Activated naive CD4-positive, alpha-beta T cell treated with anti-CD3 and anti-CD28 coated beads for 36 hours (primary cell): ENCODE measurements at regions of chrX and their contacts with region 1.

Region 1: GRCh38 chrX:153971450-153972367 is at the start of gene HCFC1:
- DNase-seq: peak; percentile 91
- H3K4me3 Mint-ChIP-seq: peak within 1 kb of the TSS; percentile 100
- H3K27ac Mint-ChIP-seq: peak within 1 kb of the TSS; percentile 100
- H3K4me1 Mint-ChIP-seq: peaks cover 31% of the 10 kb centered on the region
- H3K27me3 Mint-ChIP-seq: no peaks in the 10 kb centered on the region
- total RNA-seq, gene HCFC1: 85.0 to 86.1 TPM

Region 2: GRCh38 chrX:153724252-153725040 is 247.3 kb before region 1 on chrX and contains the starts of genes ABCD1 and BCAP31:
- CTCF ChIA-PET with region 1: no interaction called
- intact Hi-C with region 1: loop called (anchors 2 kb)
- DNase-seq: peak; percentile 88
- H3K4me3 Mint-ChIP-seq: peak within 1 kb of the TSS; percentile 85
- H3K27ac Mint-ChIP-seq: peak within 1 kb of the TSS; percentile 81
- H3K4me1 Mint-ChIP-seq: peaks cover 25% of the 10 kb centered on the region
- H3K27me3 Mint-ChIP-seq: no peaks in the 10 kb centered on the region
- total RNA-seq, gene ABCD1: 2.5 to 3.4 TPM
- total RNA-seq, gene BCAP31: 69.5 to 71.2 TPM

Region 3: DNA sequence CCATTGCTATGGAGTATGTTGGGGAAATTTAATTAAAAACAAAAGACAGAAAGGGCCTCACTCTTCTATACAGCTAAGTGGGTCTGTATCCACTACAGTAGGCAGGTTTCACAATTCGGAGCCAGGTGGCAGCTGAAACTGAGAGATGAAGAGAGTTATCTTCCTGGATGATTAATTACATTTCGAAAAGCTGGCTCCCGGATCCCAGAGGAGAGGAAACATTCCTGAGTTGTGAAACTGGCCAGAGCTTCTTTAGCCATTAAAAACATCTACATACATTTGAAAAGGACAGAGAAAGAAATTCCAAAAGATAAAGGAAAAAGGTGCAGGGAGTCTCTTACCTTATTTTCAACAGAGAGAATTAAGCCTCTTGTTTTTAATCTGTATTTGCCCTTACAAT is 125.9 kb before region 1 on chrX:
- CTCF ChIA-PET with region 1: no interaction called
- intact Hi-C with region 1: no loop called
- DNase-seq: no peak
- H3K4me3 Mint-ChIP-seq: no peak overlapping the region
- H3K27ac Mint-ChIP-seq: no peak overlapping the region
- H3K4me1 Mint-ChIP-seq: no peaks in the 10 kb centered on the region
- H3K27me3 Mint-ChIP-seq: no peaks in the 10 kb centered on the region

Region 4: GRCh38 chrX:153927922-153928760 is 43.6 kb before region 1 on chrX:
- CTCF ChIA-PET with region 1: no interaction called
- intact Hi-C with region 1: loop called (anchors 1 kb)
- DNase-seq: peak; percentile 93
- H3K4me3 Mint-ChIP-seq: peak overlapping the region; percentile 88
- H3K27ac Mint-ChIP-seq: peak overlapping the region; percentile 98
- H3K4me1 Mint-ChIP-seq: peaks cover 28% of the 10 kb centered on the region
- H3K27me3 Mint-ChIP-seq: no peaks in the 10 kb centered on the region

Region 5: GRCh38 chrX:153981771-153982533 is 10.2 kb after region 1 on chrX:
- CTCF ChIA-PET with region 1: interaction called, 6 read pairs
- intact Hi-C with region 1: loop called (anchors 1 kb)
- DNase-seq: peak; percentile 83
- H3K4me3 Mint-ChIP-seq: peak overlapping the region; percentile 63
- H3K27ac Mint-ChIP-seq: peak overlapping the region; percentile 95
- H3K4me1 Mint-ChIP-seq: peaks cover 48% of the 10 kb centered on the region
- H3K27me3 Mint-ChIP-seq: no peaks in the 10 kb centered on the region

Region 6: GRCh38 chrX:154097597-154098541 is 126.2 kb after region 1 on chrX and contains the start of gene MECP2:
- CTCF ChIA-PET with region 1: no interaction called
- intact Hi-C with region 1: loop called (anchors 1 kb)
- DNase-seq: peak; percentile 94
- H3K4me3 Mint-ChIP-seq: peak within 1 kb of the TSS; percentile 89
- H3K27ac Mint-ChIP-seq: peak within 1 kb of the TSS; percentile 94
- H3K4me1 Mint-ChIP-seq: peaks cover 44% of the 10 kb centered on the region
- H3K27me3 Mint-ChIP-seq: no peaks in the 10 kb centered on the region
- total RNA-seq, gene MECP2: 47.1 to 50.2 TPM

Region 7: DNA sequence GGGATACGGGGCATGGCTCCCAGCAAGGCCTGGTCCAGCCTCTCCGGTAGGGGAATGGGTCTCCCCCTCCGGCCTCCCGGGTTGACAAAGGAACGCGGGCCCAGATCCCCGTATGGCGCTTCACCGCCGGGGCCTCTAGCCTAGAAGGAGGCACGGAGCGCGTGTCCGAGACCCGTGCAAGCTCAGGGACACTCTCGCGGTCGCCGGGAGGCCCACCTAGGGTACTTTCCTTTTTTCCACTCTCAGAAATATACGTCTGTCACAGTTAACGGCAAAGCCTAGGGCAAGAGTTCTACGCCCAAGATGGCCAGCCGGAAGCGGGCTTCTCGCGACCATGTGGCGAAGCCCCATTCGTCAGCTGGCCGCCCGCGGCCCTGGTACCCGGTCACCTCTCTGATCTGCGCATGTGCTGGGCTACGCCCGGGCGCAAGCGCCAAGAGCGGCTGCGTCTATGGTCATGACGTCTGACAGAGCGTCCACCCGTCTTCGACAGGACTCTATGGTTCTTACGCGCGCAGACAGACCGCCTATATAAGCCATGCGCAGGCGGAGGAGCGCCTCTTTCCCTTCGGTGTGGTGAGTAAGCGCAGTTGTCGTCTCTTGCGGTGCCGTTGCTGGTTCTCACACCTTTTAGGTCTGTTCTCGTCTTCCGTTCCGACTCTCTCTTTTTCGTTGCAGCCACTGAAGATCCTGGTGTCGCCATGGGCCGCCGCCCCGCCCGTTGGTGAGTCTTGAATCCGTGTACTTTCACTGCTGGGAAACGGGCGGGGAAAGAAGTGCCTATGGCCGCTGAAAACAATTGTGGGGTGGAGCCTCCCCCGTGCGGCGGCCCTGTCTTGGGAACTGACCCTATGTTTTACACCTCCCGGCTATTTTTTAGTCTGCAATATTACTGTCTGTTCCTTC is 426.4 kb after region 1 on chrX and contains the start of gene RPL10:
- CTCF ChIA-PET with region 1: no interaction called
- intact Hi-C with region 1: loop called (anchors 1 kb)
- DNase-seq: peak; percentile 91
- H3K4me3 Mint-ChIP-seq: peak within 1 kb of the TSS; percentile 94
- H3K27ac Mint-ChIP-seq: peak within 1 kb of the TSS; percentile 100
- H3K4me1 Mint-ChIP-seq: peaks cover 11% of the 10 kb centered on the region
- H3K27me3 Mint-ChIP-seq: no peaks in the 10 kb centered on the region
- total RNA-seq, gene RPL10: 3,331 to 3,466 TPM